Activated naive CD4-positive, alpha-beta T cell treated with anti-CD3 and anti-CD28 coated beads for 36 hours (primary cell): ENCODE measurements at regions of chr17 and their contacts with region 1.

Region 1: GRCh38 chr17:43576563-43577229 is 30.6 kb upstream of the ETV4 start:
- DNase-seq: peak; percentile 78
- H3K4me3 Mint-ChIP-seq: no peak overlapping the region
- H3K27ac Mint-ChIP-seq: no peak overlapping the region
- H3K4me1 Mint-ChIP-seq: peaks cover 15% of the 10 kb centered on the region
- H3K27me3 Mint-ChIP-seq: no peaks in the 10 kb centered on the region

Region 2: GRCh38 chr17:43641416-43641815 is 64.7 kb after region 1 on chr17:
- CTCF ChIA-PET with region 1: interaction called, 14 read pairs
- intact Hi-C with region 1: no loop called
- DNase-seq: no peak
- H3K4me3 Mint-ChIP-seq: no peak overlapping the region
- H3K27ac Mint-ChIP-seq: peak overlapping the region; percentile 20
- H3K4me1 Mint-ChIP-seq: peaks cover 17% of the 10 kb centered on the region
- H3K27me3 Mint-ChIP-seq: peaks cover 10% of the 10 kb centered on the region

Region 3: DNA sequence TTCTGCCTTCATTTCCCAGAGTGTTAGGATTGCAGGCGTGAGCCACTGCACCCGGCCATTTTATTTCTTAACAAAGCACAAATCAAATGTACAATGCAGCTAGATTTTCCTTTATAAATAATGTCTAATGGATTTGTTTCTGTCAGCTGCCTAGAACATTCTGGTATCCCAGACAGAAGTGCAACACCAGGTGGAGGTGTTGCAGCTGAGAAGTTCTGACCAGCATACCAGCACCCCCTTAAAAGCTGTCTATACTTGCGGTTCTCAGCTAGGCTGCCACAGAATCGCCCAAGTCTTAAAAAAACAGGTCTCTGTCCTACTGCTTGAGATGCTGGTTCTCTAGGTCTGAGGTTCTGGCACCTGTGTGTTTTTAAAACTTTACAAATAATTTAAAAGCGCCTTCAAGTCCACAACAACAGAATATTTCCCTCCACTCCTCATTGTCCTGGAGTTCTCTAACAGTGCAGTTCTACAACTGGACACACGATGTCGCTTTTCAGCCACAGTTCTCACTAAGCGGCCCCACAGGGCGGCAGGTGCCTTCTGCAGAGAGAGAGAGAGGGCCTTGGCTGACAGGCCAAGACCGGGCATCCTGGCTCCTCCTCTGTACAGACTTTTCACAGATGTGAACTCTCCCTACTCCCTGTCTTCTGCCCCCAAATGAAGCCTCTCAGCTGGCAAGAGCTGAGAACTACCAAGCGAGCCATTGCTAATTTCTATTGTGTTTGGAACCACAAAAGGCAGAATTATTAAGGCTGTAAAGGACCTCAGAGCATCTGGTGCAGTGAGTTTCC is 117.6 kb after region 1 on chr17:
- CTCF ChIA-PET with region 1: interaction called, 18 read pairs
- intact Hi-C with region 1: no loop called
- DNase-seq: peak; percentile 87
- H3K4me3 Mint-ChIP-seq: no peak overlapping the region
- H3K27ac Mint-ChIP-seq: no peak overlapping the region
- H3K4me1 Mint-ChIP-seq: no peaks in the 10 kb centered on the region
- H3K27me3 Mint-ChIP-seq: no peaks in the 10 kb centered on the region

Region 4: GRCh38 chr17:43766413-43767052 is 189.8 kb after region 1 on chr17:
- CTCF ChIA-PET with region 1: interaction called, 21 read pairs
- intact Hi-C with region 1: loop called (anchors 2 kb)
- DNase-seq: peak; percentile 67
- H3K4me3 Mint-ChIP-seq: no peak overlapping the region
- H3K27ac Mint-ChIP-seq: no peak overlapping the region
- H3K4me1 Mint-ChIP-seq: no peaks in the 10 kb centered on the region
- H3K27me3 Mint-ChIP-seq: no peaks in the 10 kb centered on the region